Panc1 (cell line): ENCODE measurements at regions of chr5 and their contacts with region 1.

Region 1: GRCh38 chr5:38607396-38607795 is 51.0 kb upstream of the LIFR start:
- DNase-seq: no peak
- ATAC-seq: no peak
- H3K4me3 ChIP-seq: no peak overlapping the region
- H3K27ac ChIP-seq: no peak overlapping the region; the same call in 1 of the 2 replicates
- H3K4me1 ChIP-seq: peaks cover 4% of the 10 kb centered on the region
- H3K27me3 ChIP-seq: no peaks in the 10 kb centered on the region
- CTCF ChIP-seq: no peak

Region 2: GRCh38 chr5:38621840-38622437 is 14.5 kb after region 1 on chr5:
- CTCF ChIA-PET with region 1: no interaction called
- POLR2A ChIA-PET with region 1: interaction called, 16 read pairs
- in situ Hi-C with region 1: no loop called
- intact Hi-C with region 1: no loop called
- DNase-seq: no peak
- ATAC-seq: no peak
- H3K4me3 ChIP-seq: no peak overlapping the region
- H3K27ac ChIP-seq: peak overlapping the region; percentile 23; the same call in 1 of the 2 replicates
- H3K4me1 ChIP-seq: no peaks in the 10 kb centered on the region; the same call in 1 of the 2 replicates
- H3K27me3 ChIP-seq: no peaks in the 10 kb centered on the region
- CTCF ChIP-seq: no peak